IMR-90 (cell line): ENCODE measurements at regions of chr2 and their contacts with region 1.

Region 1: GRCh38 chr2:19863303-19864041 is 38.3 kb downstream of the TTC32 start:
- DNase-seq: peak; percentile 45
- ATAC-seq: peak; percentile 76
- H3K4me3 ChIP-seq: no peak overlapping the region
- H3K27ac ChIP-seq: no peak overlapping the region
- H3K4me1 ChIP-seq: peaks cover 14% of the 10 kb centered on the region
- H3K27me3 ChIP-seq: peaks cover 3% of the 10 kb centered on the region
- CTCF ChIP-seq: peak; percentile 83
- POLR2A ChIP-seq: no peak
- RAD21 ChIP-seq: peak; percentile 98

Region 2: DNA sequence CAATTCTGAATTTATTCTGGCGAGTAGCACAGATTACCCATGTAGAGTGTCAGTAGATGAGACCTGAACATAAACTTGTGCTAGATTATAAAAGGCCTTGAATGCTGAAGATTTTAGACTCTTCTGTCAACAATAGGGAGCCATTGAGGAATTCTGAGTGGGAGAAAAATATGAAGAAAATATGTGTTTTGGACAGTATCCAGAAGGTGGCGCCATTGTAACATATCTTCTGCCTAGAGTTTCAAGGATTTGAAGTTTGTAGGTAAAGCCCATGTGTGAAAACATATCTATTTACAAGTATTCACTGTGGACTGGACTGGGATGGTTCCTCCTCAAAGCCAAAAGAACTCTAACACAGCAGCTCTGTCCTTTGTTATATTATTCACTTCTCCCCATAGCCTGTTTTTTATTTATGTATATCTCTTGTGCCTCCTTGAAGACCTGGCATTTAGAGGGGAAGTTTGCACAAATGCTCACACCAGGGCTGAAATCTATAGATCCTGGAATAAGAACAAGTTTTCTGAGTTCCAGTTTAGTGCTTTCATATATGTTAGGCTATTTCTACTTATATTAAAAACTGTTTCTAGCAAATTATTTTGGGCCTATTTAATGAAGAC is 1427.9 kb before region 1 on chr2:
- CTCF ChIA-PET with region 1: interaction called, 4 read pairs
- POLR2A ChIA-PET with region 1: no interaction called
- dilution Hi-C with region 1: no loop called
- in situ Hi-C with region 1: loop called (anchors 10 kb)
- intact Hi-C with region 1: loop called (anchors 5 kb)
- DNase-seq: peak; percentile 79
- ATAC-seq: peak; percentile 57
- H3K4me3 ChIP-seq: no peak overlapping the region
- H3K27ac ChIP-seq: no peak overlapping the region
- H3K4me1 ChIP-seq: peaks cover 12% of the 10 kb centered on the region
- H3K27me3 ChIP-seq: no peaks in the 10 kb centered on the region
- CTCF ChIP-seq: peak; percentile 75
- POLR2A ChIP-seq: 0 out of 2 replicates have a peak, but pooled peaks have one; percentile 28
- RAD21 ChIP-seq: peak; percentile 84

Region 3: DNA sequence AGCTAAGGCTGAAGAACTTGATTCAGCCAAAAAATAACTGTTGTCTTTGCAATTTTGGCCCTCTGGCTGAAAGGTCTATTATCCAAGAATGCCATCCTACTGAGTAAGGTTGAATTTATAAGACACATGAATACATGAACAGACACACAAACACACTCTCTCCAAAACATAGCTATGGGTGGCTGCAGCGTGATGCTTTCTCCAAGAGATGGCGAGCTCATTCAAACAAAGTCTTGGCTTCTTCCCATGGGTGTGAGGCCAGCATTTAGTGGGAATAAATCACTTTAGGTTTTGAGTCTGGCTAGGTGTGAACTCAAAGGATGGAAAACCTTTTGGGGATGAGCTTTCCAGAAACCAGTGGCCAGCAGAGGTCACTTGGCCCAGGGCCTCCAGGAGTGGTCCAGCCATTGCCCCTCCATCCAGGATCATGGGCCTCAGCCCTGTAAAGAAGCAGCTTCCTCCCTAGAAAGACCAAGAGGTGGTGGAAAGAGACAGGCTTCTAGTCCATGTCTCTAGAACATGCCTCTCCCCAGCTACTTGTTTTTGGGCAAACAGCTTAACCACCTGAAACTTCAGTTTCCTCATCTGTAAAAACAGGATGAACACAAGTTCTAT is 494.0 kb before region 1 on chr2:
- CTCF ChIA-PET with region 1: interaction called, 4 read pairs
- POLR2A ChIA-PET with region 1: no interaction called
- dilution Hi-C with region 1: no loop called
- in situ Hi-C with region 1: loop called (anchors 5 kb)
- intact Hi-C with region 1: loop called (anchors 1 kb)
- DNase-seq: peak; percentile 50
- ATAC-seq: peak; percentile 74
- H3K4me3 ChIP-seq: no peak overlapping the region
- H3K27ac ChIP-seq: no peak overlapping the region
- H3K4me1 ChIP-seq: no peaks in the 10 kb centered on the region
- H3K27me3 ChIP-seq: peaks cover 33% of the 10 kb centered on the region
- CTCF ChIP-seq: peak; percentile 51
- POLR2A ChIP-seq: no peak
- RAD21 ChIP-seq: peak; percentile 61

Region 4: GRCh38 chr2:19746611-19747309 is 116.7 kb before region 1 on chr2:
- CTCF ChIA-PET with region 1: no interaction called
- POLR2A ChIA-PET with region 1: no interaction called
- dilution Hi-C with region 1: no loop called
- in situ Hi-C with region 1: no loop called
- intact Hi-C with region 1: loop called (anchors 1 kb)
- DNase-seq: peak; percentile 25
- ATAC-seq: peak; percentile 55
- H3K4me3 ChIP-seq: no peak overlapping the region
- H3K27ac ChIP-seq: no peak overlapping the region
- H3K4me1 ChIP-seq: peaks cover 7% of the 10 kb centered on the region
- H3K27me3 ChIP-seq: no peaks in the 10 kb centered on the region
- CTCF ChIP-seq: peak; percentile 50
- POLR2A ChIP-seq: no peak
- RAD21 ChIP-seq: peak; percentile 65

Region 5: GRCh38 chr2:19796035-19796695 is 67.3 kb before region 1 on chr2:
- CTCF ChIA-PET with region 1: no interaction called
- POLR2A ChIA-PET with region 1: no interaction called
- dilution Hi-C with region 1: no loop called
- in situ Hi-C with region 1: no loop called
- intact Hi-C with region 1: no loop called
- DNase-seq: peak; percentile 45
- ATAC-seq: no peak
- H3K4me3 ChIP-seq: no peak overlapping the region
- H3K27ac ChIP-seq: no peak overlapping the region
- H3K4me1 ChIP-seq: peaks cover 4% of the 10 kb centered on the region
- H3K27me3 ChIP-seq: peaks cover 8% of the 10 kb centered on the region
- CTCF ChIP-seq: no peak
- POLR2A ChIP-seq: no peak
- RAD21 ChIP-seq: no peak

Region 6: GRCh38 chr2:19835781-19836281 is 27.6 kb before region 1 on chr2:
- CTCF ChIA-PET with region 1: no interaction called
- POLR2A ChIA-PET with region 1: no interaction called
- dilution Hi-C with region 1: no loop called
- in situ Hi-C with region 1: no loop called
- intact Hi-C with region 1: no loop called
- DNase-seq: peak; percentile 12
- ATAC-seq: no peak; the same call in 1 of the 2 replicates
- H3K4me3 ChIP-seq: no peak overlapping the region
- H3K27ac ChIP-seq: no peak overlapping the region
- H3K4me1 ChIP-seq: no peaks in the 10 kb centered on the region
- H3K27me3 ChIP-seq: peaks cover 4% of the 10 kb centered on the region
- CTCF ChIP-seq: no peak
- POLR2A ChIP-seq: no peak
- RAD21 ChIP-seq: no peak

Region 7: DNA sequence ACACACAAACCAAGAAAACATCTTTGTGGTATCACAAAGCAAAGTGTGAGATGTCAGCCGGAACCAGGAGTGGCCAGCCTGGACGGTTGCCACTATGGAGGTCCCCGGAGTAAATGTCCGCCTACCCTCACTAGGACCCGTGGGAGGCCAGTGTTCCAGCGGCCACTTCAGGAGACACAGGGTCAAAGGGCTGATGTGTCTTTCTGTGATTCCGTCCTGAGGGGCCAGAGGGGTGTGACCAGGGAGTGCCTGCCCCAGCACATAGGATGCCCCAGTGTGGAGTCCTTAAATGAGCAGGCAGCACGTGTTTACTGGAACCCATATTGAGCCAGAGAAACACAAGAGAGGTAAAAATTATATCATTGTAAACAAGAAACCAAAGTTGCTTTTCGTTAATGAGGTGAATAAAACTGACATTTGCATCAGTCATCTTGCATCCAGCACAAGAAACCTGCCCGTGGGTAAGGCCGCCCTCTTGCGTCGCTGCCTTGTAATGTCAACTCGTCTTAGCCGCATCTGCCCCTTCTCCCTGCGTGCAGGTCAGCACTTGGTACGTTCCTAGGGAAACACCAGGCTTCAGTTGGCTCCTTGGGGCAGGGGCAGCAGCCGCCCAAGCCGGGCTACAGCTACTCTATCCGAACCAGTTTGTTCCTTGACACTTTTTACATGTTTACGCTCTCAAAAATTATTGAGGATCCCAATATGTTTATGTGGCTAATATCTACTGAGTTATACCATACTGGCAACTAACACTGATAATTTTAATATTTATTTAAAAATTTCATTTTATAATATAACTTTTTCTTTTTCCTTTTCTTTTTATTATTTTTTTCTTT is 234.6 kb after region 1 on chr2:
- CTCF ChIA-PET with region 1: no interaction called
- POLR2A ChIA-PET with region 1: no interaction called
- dilution Hi-C with region 1: no loop called
- in situ Hi-C with region 1: no loop called
- intact Hi-C with region 1: loop called (anchors 10 kb)
- DNase-seq: peak; percentile 85
- ATAC-seq: peak; percentile 85
- H3K4me3 ChIP-seq: no peak overlapping the region
- H3K27ac ChIP-seq: no peak overlapping the region
- H3K4me1 ChIP-seq: peaks cover 18% of the 10 kb centered on the region
- H3K27me3 ChIP-seq: no peaks in the 10 kb centered on the region
- CTCF ChIP-seq: peak; percentile 96
- POLR2A ChIP-seq: peak; percentile 52; the same call in 1 of the 2 replicates
- RAD21 ChIP-seq: peak; percentile 99

Region 8: GRCh38 chr2:20164061-20164733 is 300.7 kb after region 1 on chr2:
- CTCF ChIA-PET with region 1: no interaction called
- POLR2A ChIA-PET with region 1: no interaction called
- dilution Hi-C with region 1: no loop called
- in situ Hi-C with region 1: no loop called
- intact Hi-C with region 1: no loop called
- DNase-seq: no peak
- ATAC-seq: no peak
- H3K4me3 ChIP-seq: no peak overlapping the region
- H3K27ac ChIP-seq: no peak overlapping the region
- H3K4me1 ChIP-seq: peaks cover 13% of the 10 kb centered on the region
- H3K27me3 ChIP-seq: no peaks in the 10 kb centered on the region
- CTCF ChIP-seq: no peak
- POLR2A ChIP-seq: no peak
- RAD21 ChIP-seq: no peak